Adrenal gland (tissue), 19 donors: ENCODE measurements at regions of chr15 and their contacts with region 1.

Region 1: DNA sequence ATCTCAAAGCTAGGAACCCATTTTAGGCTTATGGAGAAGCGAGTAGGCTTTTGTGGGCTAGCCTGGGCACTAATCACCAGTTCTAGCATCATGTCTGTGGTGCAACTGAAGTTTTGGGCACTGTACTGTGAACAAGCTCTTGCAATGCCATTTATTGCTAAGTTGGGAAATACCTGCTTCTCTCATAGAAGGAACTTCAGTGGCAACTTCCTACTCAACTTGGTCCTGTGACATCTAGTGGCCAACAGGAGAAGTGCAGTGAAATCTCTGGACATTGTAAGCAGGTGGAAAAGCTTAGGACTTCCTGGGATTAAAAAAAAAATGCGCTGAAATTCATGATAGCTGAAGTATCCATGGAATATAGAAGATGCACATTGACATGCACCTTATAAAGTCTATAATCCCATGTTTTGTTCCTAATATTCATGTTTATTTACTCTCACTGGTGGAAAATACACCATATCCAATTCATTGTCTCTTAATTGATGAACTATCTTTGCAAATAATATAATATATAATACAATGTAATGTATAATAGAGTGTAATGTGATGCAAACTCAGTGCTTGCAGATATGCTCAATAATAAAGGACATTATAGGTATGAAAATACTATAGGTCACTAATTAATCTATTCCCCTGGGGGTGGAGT is 6.5 kb upstream of the ALDH1A3 start:
- DNase-seq: peak; percentile 62 to 92 (median 72)
- H3K4me3 ChIP-seq: no peak overlapping the region
- H3K27ac ChIP-seq: no peak overlapping the region
- H3K4me1 ChIP-seq: no peaks in the 10 kb centered on the region
- H3K27me3 ChIP-seq: peaks cover 7% of the 10 kb centered on the region
- CTCF ChIP-seq: peak; percentile 87 to 97 (median 96)
- POLR2A ChIP-seq: no peak

Region 2: DNA sequence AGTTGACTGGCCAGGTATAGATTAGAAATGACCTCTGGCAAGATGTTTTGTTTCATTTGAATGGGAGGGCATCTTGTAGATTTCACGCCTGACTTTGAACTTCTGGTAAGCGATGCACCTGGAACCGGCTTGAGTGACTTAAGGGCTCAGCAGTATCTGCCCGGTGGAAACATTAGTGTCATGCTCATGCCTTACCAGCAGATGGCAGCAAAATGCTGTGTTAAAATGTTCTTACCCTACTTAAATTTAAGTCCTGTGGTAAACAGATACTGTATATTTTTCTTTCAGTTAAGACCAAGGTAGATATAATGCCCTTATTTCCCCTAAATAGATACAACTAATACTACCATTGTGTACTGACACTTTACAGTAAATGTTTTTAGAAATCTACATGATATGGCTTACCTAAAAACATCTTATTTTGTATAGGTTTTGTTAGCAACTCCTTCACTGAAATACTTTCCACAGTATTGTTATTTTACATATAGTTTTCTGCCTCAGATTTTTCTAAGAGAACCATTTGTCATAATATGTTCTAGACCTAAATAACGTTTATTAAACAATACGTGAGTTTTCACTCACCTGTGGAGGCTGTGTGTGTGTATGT is 245.3 kb before region 1 on chr15:
- intact Hi-C with region 1: loop called (anchors 5 to 10 kb)
- DNase-seq: peak; percentile 25 to 86 (median 63)
- H3K4me3 ChIP-seq: no peak overlapping the region
- H3K27ac ChIP-seq: no peak overlapping the region
- H3K4me1 ChIP-seq: no peaks in the 10 kb centered on the region
- H3K27me3 ChIP-seq: no peaks in the 10 kb centered on the region
- CTCF ChIP-seq: peak; percentile 72 to 87 (median 84)
- POLR2A ChIP-seq: no peak

Region 3: DNA sequence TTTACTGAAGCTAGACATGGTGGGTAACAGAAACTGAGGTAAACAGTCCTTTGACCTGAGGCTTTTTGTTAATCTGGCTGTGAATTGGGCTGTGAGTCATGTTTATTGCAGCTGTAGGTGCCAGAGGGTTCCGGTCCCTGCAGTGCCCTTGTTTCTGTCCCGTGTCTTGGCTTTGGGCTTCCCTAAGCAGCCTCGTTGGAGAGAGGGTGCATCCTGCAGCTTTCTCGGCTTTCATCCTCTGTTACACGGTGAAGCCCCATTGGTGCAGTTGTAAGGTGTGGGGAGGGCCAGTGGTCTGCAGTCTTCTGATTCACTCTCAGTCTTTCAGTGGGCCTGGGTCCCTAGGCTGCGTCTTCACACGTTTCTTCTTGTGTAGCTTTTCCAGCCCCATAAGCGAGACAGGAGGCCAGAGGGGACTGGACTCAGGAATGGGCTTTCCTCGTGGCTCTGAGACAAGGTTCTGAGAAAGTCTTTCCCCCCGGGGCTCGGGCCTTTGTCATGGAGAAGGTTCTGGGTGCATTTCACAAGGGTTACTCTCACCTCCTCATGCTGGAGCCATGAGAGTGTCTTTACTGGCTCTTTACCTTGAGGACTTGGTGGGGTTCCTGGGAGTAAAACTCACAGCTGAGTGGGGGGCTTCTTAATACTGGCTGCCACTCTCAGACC is 237.6 kb before region 1 on chr15:
- intact Hi-C with region 1: loop called in 1 of 2 experiments (anchors 10 kb)
- DNase-seq: no peak
- H3K4me3 ChIP-seq: no peak overlapping the region
- H3K27ac ChIP-seq: no peak overlapping the region
- H3K4me1 ChIP-seq: no peaks in the 10 kb centered on the region
- H3K27me3 ChIP-seq: no peaks in the 10 kb centered on the region
- CTCF ChIP-seq: no peak
- POLR2A ChIP-seq: no peak

Region 4: DNA sequence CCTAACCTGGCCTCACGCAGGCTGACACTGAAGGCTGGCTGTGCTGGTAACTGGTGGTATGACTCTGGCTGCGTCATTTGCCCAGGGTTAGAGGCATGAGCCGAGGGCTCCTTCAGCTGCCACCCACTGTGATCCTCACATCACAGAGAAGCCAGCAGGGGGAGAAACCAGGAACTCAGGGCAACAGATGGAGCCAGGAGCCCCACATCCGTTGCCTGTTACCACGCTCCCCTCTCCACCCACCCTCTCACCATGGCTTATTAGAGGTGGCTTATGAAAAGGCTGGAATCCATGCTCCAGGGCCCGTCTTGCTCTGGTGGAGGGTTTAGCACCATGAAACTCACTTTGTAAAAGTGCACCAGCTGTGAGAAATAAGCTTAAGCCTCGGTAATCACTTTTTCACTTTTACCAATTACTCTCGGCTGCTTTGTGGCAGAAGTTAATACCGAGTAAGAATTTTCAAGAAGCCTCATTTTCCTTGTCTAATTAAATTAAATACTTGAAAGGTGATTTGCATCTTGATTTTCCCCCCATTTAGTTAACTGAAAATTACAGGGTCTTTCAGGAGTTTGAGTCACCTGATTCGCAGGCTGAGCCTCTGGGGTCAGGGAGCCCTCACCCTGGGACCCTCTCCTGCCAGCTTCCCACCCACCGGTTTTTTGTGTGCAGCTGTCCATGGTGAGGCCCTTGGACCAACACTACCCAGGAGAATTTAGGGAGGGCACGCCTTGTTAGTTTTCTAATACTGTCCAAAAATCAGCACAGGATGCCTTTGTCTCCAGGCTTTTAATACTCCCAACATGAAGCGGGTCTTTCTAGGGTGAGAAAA is 209.9 kb before region 1 on chr15:
- intact Hi-C with region 1: loop called in 1 of 2 experiments (anchors 5 kb)
- DNase-seq: peak in 1 of 7 donors; percentile 35
- H3K4me3 ChIP-seq: no peak overlapping the region
- H3K27ac ChIP-seq: no peak overlapping the region
- H3K4me1 ChIP-seq: no peaks in the 10 kb centered on the region
- H3K27me3 ChIP-seq: no peaks in the 10 kb centered on the region
- CTCF ChIP-seq: no peak
- POLR2A ChIP-seq: no peak